ENCODE measurements at regions of chr2 and their contacts with region 1.

Region 1: DNA sequence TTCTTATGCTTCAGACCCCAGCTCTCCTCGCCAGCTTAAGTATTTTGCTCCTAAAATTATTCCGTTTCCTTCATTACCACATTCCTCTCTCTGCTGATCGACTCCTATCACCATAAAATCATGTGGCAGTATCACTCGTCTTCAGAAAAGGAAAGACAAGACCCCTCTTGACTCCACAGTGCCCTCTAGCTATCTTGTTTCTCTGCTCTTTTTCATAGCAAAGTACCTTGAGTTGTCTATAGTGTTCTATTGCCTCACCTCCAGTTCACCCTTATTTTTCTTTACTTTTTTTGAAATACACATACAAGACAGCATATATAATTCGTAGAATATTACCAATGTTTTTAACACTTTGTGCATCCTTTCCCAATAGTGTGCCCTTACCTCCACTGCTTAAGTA is 273.2 kb upstream of the SIX3 start:
- DNase-seq: peak; percentile 9
- H3K4me3 ChIP-seq: no peak overlapping the region
- H3K27ac ChIP-seq: no peak overlapping the region
- H3K4me1 ChIP-seq: no peaks in the 10 kb centered on the region
- CTCF ChIP-seq: peak; percentile 75

Region 2: DNA sequence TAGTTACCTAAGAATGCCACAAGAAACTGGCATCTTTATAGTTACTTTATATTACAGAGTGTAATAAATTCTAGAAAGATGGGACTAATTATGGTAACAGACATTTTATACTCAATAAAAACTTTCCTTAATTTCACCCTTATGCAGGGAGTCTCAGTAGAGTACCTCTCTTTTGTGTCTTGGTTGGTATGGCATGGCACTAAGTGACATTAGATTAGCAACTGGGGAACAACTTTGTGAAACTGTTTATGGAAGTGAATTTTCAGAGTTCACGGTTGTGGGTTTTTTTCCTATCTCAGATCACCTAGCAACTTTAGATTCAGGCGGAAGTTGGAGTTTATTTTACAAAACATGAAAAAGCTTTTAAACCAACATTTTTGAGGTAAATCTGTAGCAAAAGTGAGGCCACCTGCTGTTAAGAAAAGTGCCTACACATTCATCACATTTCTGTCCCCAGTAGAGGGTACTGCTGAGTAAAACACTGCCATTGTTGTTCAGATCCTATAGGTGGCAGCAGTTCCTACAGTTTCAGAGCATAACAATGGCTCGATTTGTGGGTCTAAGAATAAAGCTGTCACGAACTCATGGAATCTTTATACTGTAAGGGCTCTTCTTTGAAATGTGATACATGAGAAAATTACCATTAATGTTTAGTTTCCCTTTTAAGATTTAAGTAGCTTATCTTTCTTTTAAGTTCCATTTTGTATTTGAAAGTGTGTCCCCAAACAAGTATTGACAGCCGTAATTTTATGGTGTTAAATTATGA is 189.0 kb before region 1 on chr2:
- CTCF ChIA-PET with region 1: no interaction called
- POLR2A ChIA-PET with region 1: no interaction called
- intact Hi-C with region 1: loop called (anchors 5 kb)
- DNase-seq: peak; percentile 83
- H3K4me3 ChIP-seq: no peak overlapping the region
- H3K27ac ChIP-seq: no peak overlapping the region
- H3K4me1 ChIP-seq: no peaks in the 10 kb centered on the region
- CTCF ChIP-seq: peak; percentile 100

Region 3: GRCh38 chr2:44655401-44655864 is 12.9 kb before region 1 on chr2:
- CTCF ChIA-PET with region 1: no interaction called
- POLR2A ChIA-PET with region 1: interaction called, 3 read pairs
- intact Hi-C with region 1: loop called (anchors 1 kb)
- DNase-seq: no peak
- H3K4me3 ChIP-seq: no peak overlapping the region
- H3K27ac ChIP-seq: no peak overlapping the region
- H3K4me1 ChIP-seq: no peaks in the 10 kb centered on the region
- CTCF ChIP-seq: no peak